PC-3 (cell line): ENCODE measurements at regions of chr7 and their contacts with region 1.

Region 1: DNA sequence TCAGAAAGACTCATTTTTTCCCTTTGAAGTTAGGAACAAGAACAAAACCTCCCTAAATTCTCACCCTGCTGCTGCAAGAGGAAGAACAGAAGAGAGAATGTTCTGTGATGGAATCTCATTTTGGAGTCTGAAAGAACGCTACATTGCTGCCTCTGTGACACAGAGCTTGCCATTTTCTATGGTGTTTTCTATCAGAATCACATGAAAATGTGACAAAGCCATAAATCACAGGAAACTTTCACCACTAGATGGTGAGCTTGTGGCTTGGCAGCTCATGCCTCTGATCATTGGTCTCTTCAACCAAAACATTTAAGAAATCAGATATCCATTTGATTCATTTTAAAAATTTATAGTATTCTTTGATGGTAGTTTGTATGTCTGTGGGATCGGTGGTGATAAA is 82.9 kb downstream of the CADPS2 start:
- DNase-seq: peak; percentile 52
- ATAC-seq: peak; percentile 71
- H3K4me3 ChIP-seq: no peak overlapping the region
- H3K27ac ChIP-seq: no peak overlapping the region
- H3K4me1 ChIP-seq: no peaks in the 10 kb centered on the region
- H3K27me3 ChIP-seq: no peaks in the 10 kb centered on the region
- CTCF ChIP-seq: peak; percentile 61

Region 2: DNA sequence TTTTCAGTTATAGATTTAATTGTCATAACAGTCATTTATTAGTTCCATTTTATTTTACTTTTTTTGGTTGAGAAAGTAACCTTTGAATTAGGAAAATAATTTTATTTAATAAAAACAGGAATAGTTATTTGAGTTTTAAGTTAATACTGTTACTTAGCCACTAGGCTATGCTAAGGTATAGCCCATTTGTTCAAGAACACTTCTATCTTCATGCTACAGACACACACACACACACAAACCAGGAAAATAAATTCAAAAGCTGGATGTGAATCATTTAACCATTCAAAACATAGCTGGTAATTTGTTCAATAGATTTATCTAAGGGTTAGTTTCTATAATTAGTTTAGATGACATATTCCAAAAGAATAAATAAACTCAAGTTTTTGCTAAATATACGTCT is 252.8 kb before region 1 on chr7:
- CTCF ChIA-PET with region 1: no interaction called
- POLR2A ChIA-PET with region 1: no interaction called
- intact Hi-C with region 1: loop called (anchors 1 kb)
- DNase-seq: peak; percentile 4
- ATAC-seq: no peak
- H3K4me3 ChIP-seq: no peak overlapping the region
- H3K27ac ChIP-seq: no peak overlapping the region
- H3K4me1 ChIP-seq: no peaks in the 10 kb centered on the region
- H3K27me3 ChIP-seq: no peaks in the 10 kb centered on the region
- CTCF ChIP-seq: peak; percentile 32; the same call in 1 of the 2 replicates

Region 3: GRCh38 chr7:122813845-122814244 is 10.5 kb after region 1 on chr7:
- CTCF ChIA-PET with region 1: no interaction called
- POLR2A ChIA-PET with region 1: interaction called, 10 read pairs
- intact Hi-C with region 1: no loop called
- DNase-seq: no peak
- ATAC-seq: no peak
- H3K4me3 ChIP-seq: no peak overlapping the region
- H3K27ac ChIP-seq: no peak overlapping the region
- H3K4me1 ChIP-seq: no peaks in the 10 kb centered on the region
- H3K27me3 ChIP-seq: no peaks in the 10 kb centered on the region
- CTCF ChIP-seq: no peak

Region 4: DNA sequence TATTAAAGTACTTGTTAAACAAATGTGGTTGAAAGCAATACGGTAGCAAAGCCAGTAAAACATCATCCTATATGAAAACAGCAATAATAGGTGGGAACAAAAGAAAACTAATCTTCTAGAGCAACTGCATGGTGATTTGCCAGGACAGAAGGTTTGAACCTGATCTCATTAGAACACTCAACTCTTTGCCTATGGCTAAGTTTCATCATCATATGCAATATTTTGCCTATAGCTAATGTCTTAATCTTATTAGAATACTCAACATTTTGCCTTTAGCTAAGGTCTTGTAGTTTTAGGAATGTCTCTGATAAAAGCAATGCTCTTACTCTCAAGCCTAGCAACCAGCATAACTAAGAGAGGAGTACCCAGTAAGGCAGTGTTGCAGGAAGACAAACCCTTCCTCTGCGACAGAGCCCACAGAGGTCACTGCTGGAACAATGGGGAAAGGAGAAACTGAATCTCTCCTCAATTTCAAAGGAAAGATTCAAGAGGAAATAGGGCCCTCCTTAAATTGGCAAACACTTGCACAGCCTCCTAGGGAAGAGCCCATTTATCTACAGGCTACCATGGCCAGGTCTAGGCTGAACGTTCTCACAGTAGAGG is 44.6 kb after region 1 on chr7:
- CTCF ChIA-PET with region 1: no interaction called
- POLR2A ChIA-PET with region 1: no interaction called
- intact Hi-C with region 1: no loop called
- DNase-seq: no peak
- ATAC-seq: no peak
- H3K4me3 ChIP-seq: no peak overlapping the region
- H3K27ac ChIP-seq: no peak overlapping the region
- H3K4me1 ChIP-seq: 0 out of 2 replicates have a peak, but pooled peaks cover 7% of the 10 kb centered on the region
- H3K27me3 ChIP-seq: no peaks in the 10 kb centered on the region
- CTCF ChIP-seq: no peak

Region 5: GRCh38 chr7:123054357-123055130 is 251.2 kb after region 1 on chr7:
- CTCF ChIA-PET with region 1: no interaction called
- POLR2A ChIA-PET with region 1: no interaction called
- intact Hi-C with region 1: loop called (anchors 1 kb)
- DNase-seq: peak; percentile 19
- ATAC-seq: peak; percentile 65
- H3K4me3 ChIP-seq: no peak overlapping the region
- H3K27ac ChIP-seq: no peak overlapping the region
- H3K4me1 ChIP-seq: no peaks in the 10 kb centered on the region
- H3K27me3 ChIP-seq: no peaks in the 10 kb centered on the region
- CTCF ChIP-seq: peak; percentile 42